B cell (primary cell): ENCODE measurements at regions of chr21 and their contacts with region 1.

Region 1: DNA sequence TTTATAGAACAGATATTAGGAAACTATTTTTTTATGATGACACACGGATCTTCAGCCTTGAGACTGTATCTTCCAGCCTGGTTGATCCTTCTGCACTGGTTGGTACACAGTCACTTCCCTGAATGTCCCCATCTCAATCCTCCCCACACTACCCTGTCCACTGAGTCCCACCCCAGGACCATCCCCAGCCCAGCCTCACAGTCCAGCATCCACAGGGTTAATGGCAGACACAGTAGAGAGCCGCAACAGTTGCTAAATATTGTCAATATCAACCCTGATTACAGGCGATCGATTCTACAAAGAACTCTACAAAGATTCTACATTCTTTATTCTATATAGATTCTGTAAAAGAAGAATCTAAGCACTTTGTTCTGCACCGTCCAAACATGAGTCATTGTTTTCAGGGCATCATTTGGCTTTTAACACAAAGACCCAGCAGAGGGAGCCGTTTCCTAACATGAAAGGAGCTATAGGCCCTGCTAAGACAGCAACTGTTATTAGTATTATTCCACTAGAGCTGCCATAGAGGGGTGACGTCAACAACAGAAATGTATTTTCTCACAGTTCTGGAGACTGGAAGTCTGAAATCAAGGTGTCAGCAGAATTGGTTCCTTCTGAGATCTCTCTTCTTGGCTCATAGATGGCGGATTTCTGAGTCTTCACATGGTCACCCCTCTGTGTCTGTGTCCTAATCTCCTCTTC is 30.1 kb upstream of the IFNAR2 start:
- DNase-seq: peak; percentile 90
- ATAC-seq: peak; percentile 94
- H3K4me3 ChIP-seq: no peak overlapping the region
- H3K4me3 Mint-ChIP-seq: no peak overlapping the region
- H3K27ac ChIP-seq: peak overlapping the region in 1 of 2 donors; percentile 39
- H3K27ac Mint-ChIP-seq: peak overlapping the region; percentile 51
- H3K4me1 ChIP-seq: peaks cover 20 to 25% of the 10 kb centered on the region in 2 donors
- H3K4me1 Mint-ChIP-seq: peaks cover 30% of the 10 kb centered on the region
- H3K27me3 ChIP-seq: no peaks in the 10 kb centered on the region
- H3K27me3 Mint-ChIP-seq: peaks cover 15% of the 10 kb centered on the region
- CTCF ChIP-seq: peak; percentile 86

Region 2: DNA sequence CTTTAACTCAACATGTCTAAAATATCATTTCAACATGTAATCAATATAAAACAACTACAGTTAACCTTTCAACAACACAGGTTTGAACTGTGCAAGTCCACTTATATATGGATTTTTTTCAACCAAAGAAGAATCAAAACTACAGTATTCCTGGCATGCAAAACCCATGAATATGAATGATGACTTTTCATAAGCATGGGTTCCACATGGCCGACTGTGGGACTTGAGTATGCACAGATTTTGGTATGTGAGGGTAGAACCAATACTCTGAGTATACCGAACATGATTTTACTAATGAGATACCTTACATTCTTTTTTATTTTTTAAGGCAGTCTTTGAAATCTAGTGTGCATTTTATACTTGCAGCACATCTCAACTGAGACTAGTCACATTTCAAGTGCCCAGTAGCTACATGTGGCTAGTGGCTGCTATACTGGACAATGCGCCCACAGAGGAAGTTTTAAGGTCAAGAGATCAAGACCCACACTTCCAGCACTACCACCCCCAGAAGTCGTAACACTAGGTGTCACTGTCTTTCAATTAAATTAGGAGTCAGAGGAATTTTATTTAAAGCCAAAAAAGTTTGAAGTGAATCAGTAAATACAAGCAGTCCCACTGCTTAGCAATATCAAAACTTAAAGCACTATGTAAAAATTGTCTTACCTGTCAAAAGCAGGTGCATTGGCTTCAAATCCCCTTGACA is 511.9 kb before region 1 on chr21:
- CTCF ChIA-PET with region 1: no interaction called
- POLR2A ChIA-PET with region 1: no interaction called
- intact Hi-C with region 1: no loop called
- DNase-seq: peak; percentile 17
- ATAC-seq: no peak
- H3K4me3 ChIP-seq: no peak overlapping the region
- H3K4me3 Mint-ChIP-seq: no peak overlapping the region
- H3K27ac ChIP-seq: no peak overlapping the region
- H3K27ac Mint-ChIP-seq: no peak overlapping the region
- H3K4me1 ChIP-seq: no peaks in the 10 kb centered on the region
- H3K4me1 Mint-ChIP-seq: no peaks in the 10 kb centered on the region
- H3K27me3 ChIP-seq: no peaks in the 10 kb centered on the region
- H3K27me3 Mint-ChIP-seq: no peaks in the 10 kb centered on the region
- CTCF ChIP-seq: peak; percentile 30

Region 3: DNA sequence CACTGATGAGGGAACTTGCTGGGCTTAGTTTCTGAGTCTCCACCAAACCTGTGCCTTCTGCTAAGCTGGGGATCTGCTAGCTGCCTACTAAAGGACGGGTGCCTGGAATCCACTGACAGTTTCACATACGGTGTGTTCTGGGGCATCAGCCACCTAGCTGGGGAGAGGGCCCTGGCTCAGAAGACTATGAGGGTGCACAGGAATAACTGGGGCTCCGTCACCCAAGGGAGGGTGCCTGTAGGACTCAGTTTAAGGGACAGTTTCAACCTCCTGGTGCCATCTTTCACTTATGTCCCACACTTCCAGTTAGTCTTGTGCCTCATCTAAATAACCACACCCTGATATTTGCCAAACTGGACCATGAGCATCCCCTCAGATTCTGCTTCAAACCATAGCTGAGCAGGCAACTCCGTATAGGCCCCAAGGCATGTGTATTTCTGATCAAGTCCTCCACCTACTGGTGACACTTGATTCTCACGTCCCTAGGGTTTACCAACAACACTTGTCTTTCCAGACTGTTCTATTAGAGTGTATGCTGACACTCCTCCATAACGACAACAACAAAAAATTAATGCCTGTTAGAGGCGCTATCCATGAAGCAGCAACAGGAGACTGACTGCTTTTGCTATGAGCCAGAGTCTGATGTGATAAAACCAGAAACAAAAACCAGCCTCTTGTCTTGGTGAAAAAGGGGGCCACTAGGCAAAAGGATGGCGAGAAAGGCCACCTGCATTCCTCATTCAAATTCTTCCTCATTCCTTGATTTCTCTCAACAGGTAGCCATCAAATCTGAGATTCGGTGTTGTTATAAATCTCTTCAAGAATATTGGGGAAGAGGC is 373.1 kb before region 1 on chr21:
- CTCF ChIA-PET with region 1: interaction called, 27 read pairs
- POLR2A ChIA-PET with region 1: no interaction called
- intact Hi-C with region 1: loop called (anchors 5 kb)
- DNase-seq: peak; percentile 64
- ATAC-seq: peak; percentile 66
- H3K4me3 ChIP-seq: no peak overlapping the region
- H3K4me3 Mint-ChIP-seq: no peak overlapping the region
- H3K27ac ChIP-seq: no peak overlapping the region
- H3K27ac Mint-ChIP-seq: no peak overlapping the region
- H3K4me1 ChIP-seq: no peaks in the 10 kb centered on the region
- H3K4me1 Mint-ChIP-seq: no peaks in the 10 kb centered on the region
- H3K27me3 ChIP-seq: peaks cover 0 to 2% (median 0%) of the 10 kb centered on the region in 4 experiments
- H3K27me3 Mint-ChIP-seq: peaks cover 13% of the 10 kb centered on the region
- CTCF ChIP-seq: peak; percentile 72

Region 4: GRCh38 chr21:32940079-32941014 is 259.3 kb before region 1 on chr21:
- CTCF ChIA-PET with region 1: interaction called, 51 read pairs
- POLR2A ChIA-PET with region 1: no interaction called
- intact Hi-C with region 1: loop called (anchors 1 kb)
- DNase-seq: peak; percentile 63
- ATAC-seq: no peak
- H3K4me3 ChIP-seq: no peak overlapping the region
- H3K4me3 Mint-ChIP-seq: no peak overlapping the region
- H3K27ac ChIP-seq: no peak overlapping the region
- H3K27ac Mint-ChIP-seq: no peak overlapping the region
- H3K4me1 ChIP-seq: no peaks in the 10 kb centered on the region
- H3K4me1 Mint-ChIP-seq: no peaks in the 10 kb centered on the region
- H3K27me3 ChIP-seq: peaks cover 0 to 14% (median 2%) of the 10 kb centered on the region in 4 experiments
- H3K27me3 Mint-ChIP-seq: peaks cover 24% of the 10 kb centered on the region
- CTCF ChIP-seq: peak; percentile 85

Region 5: DNA sequence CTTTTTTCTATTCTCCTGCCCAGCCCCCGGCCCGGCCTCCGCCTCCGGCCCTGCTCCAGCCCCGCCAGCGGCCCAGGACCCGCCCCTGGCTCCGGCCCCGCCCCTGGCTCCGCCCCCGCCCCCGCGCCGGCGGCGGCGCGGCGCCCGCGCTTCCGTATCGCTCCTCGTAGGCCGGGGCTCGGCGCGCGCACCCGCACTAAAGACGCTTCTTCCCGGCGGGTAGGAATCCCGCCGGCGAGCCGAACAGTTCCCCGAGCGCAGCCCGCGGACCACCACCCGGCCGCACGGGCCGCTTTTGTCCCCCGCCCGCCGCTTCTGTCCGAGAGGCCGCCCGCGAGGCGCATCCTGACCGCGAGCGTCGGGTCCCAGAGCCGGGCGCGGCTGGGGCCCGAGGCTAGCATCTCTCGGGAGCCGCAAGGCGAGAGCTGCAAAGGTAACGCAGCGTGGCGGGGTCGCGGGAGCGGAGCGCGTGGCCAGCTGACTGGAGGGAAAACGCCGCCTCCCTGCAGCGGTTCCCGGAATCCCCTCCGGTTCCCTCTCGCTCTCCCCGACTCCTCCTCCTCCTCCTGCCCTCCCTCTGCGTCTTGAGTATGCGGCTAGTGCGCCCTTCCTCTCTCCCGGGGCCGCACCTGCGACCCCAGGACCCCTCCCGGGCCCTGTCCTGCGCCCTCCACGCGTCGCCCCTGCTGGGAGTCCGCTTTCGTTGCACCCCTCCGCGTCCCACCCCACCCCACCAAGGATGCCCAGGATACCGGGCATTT is 30.3 kb after region 1 on chr21 and contains the start of gene IFNAR2:
- CTCF ChIA-PET with region 1: interaction called, 14 read pairs
- POLR2A ChIA-PET with region 1: no interaction called
- intact Hi-C with region 1: loop called (anchors 1 kb)
- DNase-seq: peak; percentile 85
- ATAC-seq: peak; percentile 90
- H3K4me3 ChIP-seq: peak within 1 kb of the TSS; percentile 66 to 97 (median 93)
- H3K4me3 Mint-ChIP-seq: peak within 1 kb of the TSS; percentile 92
- H3K27ac ChIP-seq: peak within 1 kb of the TSS; percentile 54 to 84
- H3K27ac Mint-ChIP-seq: peak within 1 kb of the TSS; percentile 89
- H3K4me1 ChIP-seq: peaks cover 30 to 37% of the 10 kb centered on the region in 2 donors
- H3K4me1 Mint-ChIP-seq: peaks cover 43% of the 10 kb centered on the region
- H3K27me3 ChIP-seq: no peaks in the 10 kb centered on the region
- H3K27me3 Mint-ChIP-seq: no peaks in the 10 kb centered on the region
- CTCF ChIP-seq: no peak
- total RNA-seq, gene IFNAR2: 45.0 and 52.2 TPM in 2 replicates

Region 6: GRCh38 chr21:33324291-33325221 is 124.9 kb after region 1 on chr21 and contains the start of gene IFNAR1:
- CTCF ChIA-PET with region 1: interaction called, 20 read pairs
- POLR2A ChIA-PET with region 1: interaction called, 4 read pairs
- intact Hi-C with region 1: loop called (anchors 2 kb)
- DNase-seq: peak; percentile 99
- ATAC-seq: peak; percentile 81
- H3K4me3 ChIP-seq: peak within 1 kb of the TSS; percentile 83 to 98 (median 97)
- H3K4me3 Mint-ChIP-seq: no peak within 1 kb of the TSS
- H3K27ac ChIP-seq: peak within 1 kb of the TSS; percentile 91 to 97
- H3K27ac Mint-ChIP-seq: no peak within 1 kb of the TSS
- H3K4me1 ChIP-seq: peaks cover 28 to 35% of the 10 kb centered on the region in 2 donors
- H3K4me1 Mint-ChIP-seq: peaks cover 30% of the 10 kb centered on the region
- H3K27me3 ChIP-seq: no peaks in the 10 kb centered on the region
- H3K27me3 Mint-ChIP-seq: no peaks in the 10 kb centered on the region
- CTCF ChIP-seq: no peak
- total RNA-seq, gene IFNAR1: 55.7 and 57.7 TPM in 2 replicates

Region 7: DNA sequence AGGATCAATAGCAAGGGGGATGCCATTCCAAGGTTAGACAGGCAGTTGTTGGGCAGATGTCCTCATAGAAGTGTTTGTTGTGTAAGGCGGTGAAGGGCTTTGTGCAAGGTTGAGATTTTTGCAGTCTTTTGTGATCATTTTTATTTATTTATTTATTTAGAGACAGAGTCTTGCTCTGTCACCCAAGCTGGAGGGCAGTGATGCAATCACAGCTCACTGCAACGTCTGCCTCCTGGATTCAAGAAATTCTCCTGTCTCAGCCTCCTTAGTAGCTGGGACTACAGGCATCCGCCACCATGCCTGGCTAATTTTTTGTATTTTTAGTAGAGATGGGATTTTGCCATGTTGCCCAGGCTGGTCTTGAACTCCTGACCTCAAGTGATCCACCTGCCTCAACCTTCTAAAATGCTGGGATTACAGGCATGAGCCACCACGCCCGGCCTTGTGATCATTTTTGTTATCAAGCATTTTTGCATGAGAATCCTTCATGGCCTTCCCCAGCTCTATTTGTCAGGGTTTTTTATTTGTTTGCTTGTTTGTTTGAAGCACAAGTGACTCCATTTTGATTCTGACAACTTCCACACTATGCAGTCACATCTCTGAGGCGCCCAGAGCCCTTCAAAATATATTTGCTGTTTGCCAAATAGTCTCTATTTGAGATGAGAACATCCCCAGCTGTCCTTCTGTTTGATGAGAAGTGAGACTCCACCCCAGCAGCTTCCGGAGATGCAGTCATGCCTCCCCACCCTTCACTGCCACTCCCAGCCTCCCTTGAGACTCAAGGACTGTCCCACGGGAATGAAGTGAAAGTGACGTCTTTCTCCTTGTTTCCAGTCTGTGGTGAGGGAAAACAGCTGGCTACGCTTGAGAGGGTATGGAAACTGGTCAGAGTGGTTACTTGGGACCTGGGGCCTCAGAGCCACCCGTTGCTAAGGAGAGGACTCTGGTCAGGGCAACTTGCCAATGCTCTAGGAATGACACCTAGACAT is 242.1 kb after region 1 on chr21:
- CTCF ChIA-PET with region 1: interaction called, 140 read pairs
- POLR2A ChIA-PET with region 1: interaction called, 3 read pairs
- intact Hi-C with region 1: loop called (anchors 1 kb)
- DNase-seq: peak; percentile 77
- ATAC-seq: peak; percentile 93
- H3K4me3 ChIP-seq: peak overlapping the region in 1 of 5 experiments; percentile 38
- H3K4me3 Mint-ChIP-seq: peak overlapping the region; percentile 71
- H3K27ac ChIP-seq: peak overlapping the region; percentile 88
- H3K27ac Mint-ChIP-seq: peak overlapping the region; percentile 96
- H3K4me1 ChIP-seq: peaks cover 56 to 65% of the 10 kb centered on the region in 2 donors
- H3K4me1 Mint-ChIP-seq: peaks cover 55% of the 10 kb centered on the region
- H3K27me3 ChIP-seq: no peaks in the 10 kb centered on the region
- H3K27me3 Mint-ChIP-seq: no peaks in the 10 kb centered on the region
- CTCF ChIP-seq: no peak

Region 8: DNA sequence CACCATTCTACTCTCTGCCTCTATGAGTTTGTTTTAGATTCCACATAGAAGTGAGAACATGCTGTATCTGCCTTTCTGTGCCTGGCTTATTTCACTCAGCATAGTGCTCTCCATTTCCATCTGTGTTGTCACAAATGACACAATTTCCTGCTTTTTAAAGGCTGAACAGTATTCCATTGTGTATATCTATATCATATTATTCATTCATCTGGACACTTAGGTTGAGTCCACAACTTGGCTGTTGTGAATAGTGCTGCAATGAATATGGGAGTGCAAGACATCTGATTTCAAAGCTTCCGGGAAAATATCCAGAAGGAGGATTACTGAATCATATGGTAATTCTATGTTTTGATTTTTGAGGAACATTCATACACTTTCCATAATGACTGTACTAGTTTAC is 408.9 kb after region 1 on chr21:
- CTCF ChIA-PET with region 1: interaction called, 19 read pairs
- POLR2A ChIA-PET with region 1: no interaction called
- intact Hi-C with region 1: loop called (anchors 10 kb)
- DNase-seq: no peak
- ATAC-seq: no peak
- H3K4me3 ChIP-seq: no peak overlapping the region
- H3K4me3 Mint-ChIP-seq: no peak overlapping the region
- H3K27ac ChIP-seq: no peak overlapping the region
- H3K27ac Mint-ChIP-seq: no peak overlapping the region
- H3K4me1 ChIP-seq: no peaks in the 10 kb centered on the region
- H3K4me1 Mint-ChIP-seq: no peaks in the 10 kb centered on the region
- H3K27me3 ChIP-seq: no peaks in the 10 kb centered on the region
- H3K27me3 Mint-ChIP-seq: no peaks in the 10 kb centered on the region
- CTCF ChIP-seq: no peak